ENCODE measurements at regions of chr5 and their contacts with region 1.

Region 1: DNA sequence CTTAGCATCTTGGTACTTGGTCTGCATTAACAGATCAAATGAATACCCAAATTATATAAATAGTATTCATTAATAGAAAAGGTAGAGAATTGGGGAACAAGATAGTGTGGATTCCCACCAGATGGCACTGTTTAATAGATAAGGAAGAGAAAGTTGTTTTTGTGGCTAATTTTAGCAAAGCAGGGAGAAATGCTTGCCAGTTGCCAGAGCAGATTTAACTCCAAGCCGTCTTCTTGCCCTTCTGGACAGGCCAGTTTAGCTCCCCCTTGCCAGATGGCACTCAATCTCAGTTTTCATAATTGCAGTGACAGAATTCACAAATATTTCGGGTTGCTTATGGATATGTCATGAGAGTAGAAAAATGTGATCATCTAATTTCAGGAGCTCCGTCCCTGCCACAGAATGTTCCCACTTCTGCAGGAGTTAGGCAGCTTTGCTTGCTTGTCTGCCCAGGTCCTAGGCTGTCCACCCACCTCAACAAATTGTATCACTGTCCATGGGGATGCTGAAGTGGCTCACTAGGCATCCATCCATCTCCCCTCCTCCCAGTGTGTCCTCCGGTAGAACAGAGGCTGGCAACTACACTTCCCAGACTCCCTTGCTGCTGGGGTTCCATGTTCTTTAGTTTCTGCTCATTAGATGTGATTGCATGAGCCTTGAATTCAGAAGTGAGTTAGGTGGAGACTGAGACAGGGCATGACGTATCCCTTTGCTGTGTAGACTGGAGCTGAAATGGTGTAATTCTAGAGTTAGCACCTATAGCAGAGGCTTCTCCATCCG is 11.8 kb upstream of the HEXB start:
- DNase-seq: peak in 3 of 14 experiments; percentile 39 to 40 (median 39)
- ATAC-seq: no peak
- H3K4me3 ChIP-seq: no peak overlapping the region
- H3K4me3 Mint-ChIP-seq: no peak overlapping the region
- H3K27ac ChIP-seq: no peak overlapping the region
- H3K27ac Mint-ChIP-seq: no peak overlapping the region
- H3K4me1 ChIP-seq: no peaks in the 10 kb centered on the region
- H3K4me1 Mint-ChIP-seq: no peaks in the 10 kb centered on the region
- H3K27me3 ChIP-seq: no peaks in the 10 kb centered on the region
- H3K27me3 Mint-ChIP-seq: peaks cover 9% of the 10 kb centered on the region
- CTCF ChIP-seq: peak; percentile 35

Region 2: GRCh38 chr5:74798977-74799911 is 126.0 kb after region 1 on chr5:
- CTCF ChIA-PET with region 1: no interaction called
- POLR2A ChIA-PET with region 1: no interaction called
- intact Hi-C with region 1: no loop called
- DNase-seq: no peak
- ATAC-seq: no peak
- H3K4me3 ChIP-seq: no peak overlapping the region
- H3K4me3 Mint-ChIP-seq: no peak overlapping the region
- H3K27ac ChIP-seq: no peak overlapping the region
- H3K27ac Mint-ChIP-seq: no peak overlapping the region
- H3K4me1 ChIP-seq: no peaks in the 10 kb centered on the region
- H3K4me1 Mint-ChIP-seq: no peaks in the 10 kb centered on the region
- H3K27me3 ChIP-seq: no peaks in the 10 kb centered on the region
- H3K27me3 Mint-ChIP-seq: no peaks in the 10 kb centered on the region
- CTCF ChIP-seq: no peak

Region 3: GRCh38 chr5:74919487-74919886 is 246.3 kb after region 1 on chr5:
- CTCF ChIA-PET with region 1: no interaction called
- POLR2A ChIA-PET with region 1: no interaction called
- intact Hi-C with region 1: loop called in 1 of 2 experiments (anchors 2 kb)
- DNase-seq: peak in 4 of 14 experiments; percentile 35 to 69 (median 61)
- ATAC-seq: peak; percentile 69
- H3K4me3 ChIP-seq: no peak overlapping the region
- H3K4me3 Mint-ChIP-seq: no peak overlapping the region
- H3K27ac ChIP-seq: no peak overlapping the region
- H3K27ac Mint-ChIP-seq: no peak overlapping the region
- H3K4me1 ChIP-seq: no peaks in the 10 kb centered on the region
- H3K4me1 Mint-ChIP-seq: no peaks in the 10 kb centered on the region
- H3K27me3 ChIP-seq: no peaks in the 10 kb centered on the region
- H3K27me3 Mint-ChIP-seq: no peaks in the 10 kb centered on the region
- CTCF ChIP-seq: peak; percentile 62

Measured in CD4-positive, alpha-beta T cell (primary cell).